ENCODE measurements at regions of chr5 and their contacts with region 1.

Region 1: GRCh38 chr5:55994574-55995333 is at the start of gene IL6ST:
- DNase-seq: peak; percentile 92 to 96 (median 94)
- H3K4me3 ChIP-seq: peak within 1 kb of the TSS; percentile 86 to 96 (median 96)
- H3K4me3 Mint-ChIP-seq: peak within 1 kb of the TSS; percentile 98 to 99
- H3K27ac ChIP-seq: peak within 1 kb of the TSS; percentile 96 to 98
- H3K27ac Mint-ChIP-seq: peak within 1 kb of the TSS; percentile 96 to 99 (median 99)
- H3K4me1 ChIP-seq: peaks cover 32 to 47% of the 10 kb centered on the region in 2 donors
- H3K4me1 Mint-ChIP-seq: peaks cover 54% of the 10 kb centered on the region
- H3K27me3 ChIP-seq: no peaks in the 10 kb centered on the region
- H3K27me3 Mint-ChIP-seq: no peaks in the 10 kb centered on the region
- CTCF ChIP-seq: no peak
- polyA plus RNA-seq, gene IL6ST: 22.1 to 28.7 (median 25.7) TPM

Region 2: DNA sequence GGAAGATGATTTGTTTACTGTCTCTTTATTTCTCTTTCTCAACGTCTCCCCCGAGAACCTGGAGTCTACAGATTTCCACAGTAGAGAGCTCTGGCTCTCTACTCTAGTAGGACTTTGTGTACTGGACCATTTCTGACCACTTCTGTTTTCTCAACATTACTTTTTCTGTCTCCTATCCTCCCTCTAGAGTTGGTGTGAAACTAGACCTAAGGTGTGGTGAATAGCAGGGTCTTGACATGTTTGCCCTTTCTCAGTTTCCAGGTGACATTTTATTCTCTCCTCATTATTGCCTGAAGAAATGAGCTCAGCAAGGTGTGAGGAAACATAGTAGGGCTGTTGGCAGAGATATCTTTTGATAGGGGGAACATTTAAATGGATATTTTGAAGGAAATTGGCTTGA is 62.1 kb after region 1 on chr5:
- intact Hi-C with region 1: no loop called
- DNase-seq: no peak
- H3K4me3 ChIP-seq: no peak overlapping the region
- H3K4me3 Mint-ChIP-seq: no peak overlapping the region
- H3K27ac ChIP-seq: no peak overlapping the region
- H3K27ac Mint-ChIP-seq: no peak overlapping the region
- H3K4me1 ChIP-seq: peaks cover 16 to 23% of the 10 kb centered on the region in 2 donors
- H3K4me1 Mint-ChIP-seq: peaks cover 39% of the 10 kb centered on the region
- H3K27me3 ChIP-seq: no peaks in the 10 kb centered on the region
- H3K27me3 Mint-ChIP-seq: peaks cover 0 to 2% (median 2%) of the 10 kb centered on the region in 3 donors
- CTCF ChIP-seq: no peak

Region 3: DNA sequence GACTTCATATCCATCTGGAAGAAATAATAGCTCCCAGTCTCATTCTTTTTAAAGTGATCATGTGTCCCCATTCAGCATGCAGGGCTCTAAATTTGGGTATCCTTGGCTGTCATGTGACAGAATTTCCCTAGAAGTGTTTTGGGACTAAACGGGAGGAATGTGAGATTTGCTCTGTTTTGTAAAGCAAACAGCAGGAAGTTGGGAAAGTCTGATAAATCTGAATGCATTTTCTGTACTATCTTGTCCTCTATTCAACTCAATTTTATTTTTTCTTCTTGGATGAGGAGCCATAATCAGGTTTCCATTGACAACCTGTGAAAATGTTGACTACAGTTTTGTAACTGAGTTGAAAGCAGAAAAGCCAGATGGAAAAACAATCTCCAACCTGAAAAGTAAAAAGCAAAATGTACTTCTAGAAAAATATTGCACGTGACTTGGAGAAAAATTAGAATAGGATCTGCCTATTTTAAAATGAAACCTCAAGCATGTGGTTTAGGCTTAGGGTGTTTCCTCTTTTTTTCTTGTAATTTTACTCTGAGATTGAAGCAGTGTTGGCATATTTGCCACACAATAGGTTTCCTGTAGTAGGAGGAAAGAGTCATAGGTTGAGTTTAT is 76.2 kb after region 1 on chr5:
- intact Hi-C with region 1: loop called in 1 of 2 experiments (anchors 5 kb)
- DNase-seq: peak; percentile 32 to 62 (median 43)
- H3K4me3 ChIP-seq: peak overlapping the region in 2 of 3 experiments; percentile 17 to 54
- H3K4me3 Mint-ChIP-seq: peak overlapping the region in 1 of 2 donors; percentile 66
- H3K27ac ChIP-seq: peak overlapping the region; percentile 68 to 74
- H3K27ac Mint-ChIP-seq: peak overlapping the region; percentile 71 to 86 (median 84)
- H3K4me1 ChIP-seq: peaks cover 27 to 46% of the 10 kb centered on the region in 2 donors
- H3K4me1 Mint-ChIP-seq: peaks cover 57% of the 10 kb centered on the region
- H3K27me3 ChIP-seq: no peaks in the 10 kb centered on the region
- H3K27me3 Mint-ChIP-seq: peaks cover 2 to 14% (median 5%) of the 10 kb centered on the region in 3 donors
- CTCF ChIP-seq: no peak

Region 4: DNA sequence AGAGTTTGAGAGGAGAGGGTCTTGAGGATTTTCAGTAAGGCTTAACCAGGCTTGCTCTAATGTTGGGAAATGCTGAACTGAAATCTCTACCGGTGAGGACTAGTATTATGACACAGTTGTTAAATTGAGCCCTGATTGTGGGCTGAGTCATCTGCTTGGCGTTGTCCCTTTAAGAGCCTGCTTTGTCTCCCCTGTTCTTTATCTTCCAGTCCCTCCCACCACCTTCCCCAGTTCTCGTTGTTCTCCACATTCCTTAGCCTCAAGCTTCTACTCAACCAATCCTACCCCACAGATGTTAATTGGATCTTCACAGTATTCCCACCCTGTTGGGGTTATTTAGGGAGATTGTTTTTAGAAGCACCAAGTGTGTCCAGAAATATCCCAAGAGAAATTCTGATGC is 180.7 kb after region 1 on chr5:
- intact Hi-C with region 1: loop called in 1 of 2 experiments (anchors 10 kb)
- DNase-seq: peak; percentile 67 to 88 (median 86)
- H3K4me3 ChIP-seq: peak overlapping the region in 2 of 3 experiments; percentile 41 to 57
- H3K4me3 Mint-ChIP-seq: peak overlapping the region; percentile 57 to 75
- H3K27ac ChIP-seq: peak overlapping the region; percentile 77 to 89
- H3K27ac Mint-ChIP-seq: peak overlapping the region; percentile 93 to 99 (median 95)
- H3K4me1 ChIP-seq: peaks cover 77% of the 10 kb centered on the region in 2 donors
- H3K4me1 Mint-ChIP-seq: peaks cover 78% of the 10 kb centered on the region
- H3K27me3 ChIP-seq: no peaks in the 10 kb centered on the region
- H3K27me3 Mint-ChIP-seq: peaks cover 0 to 2% (median 1%) of the 10 kb centered on the region in 3 donors
- CTCF ChIP-seq: no peak

Region 5: DNA sequence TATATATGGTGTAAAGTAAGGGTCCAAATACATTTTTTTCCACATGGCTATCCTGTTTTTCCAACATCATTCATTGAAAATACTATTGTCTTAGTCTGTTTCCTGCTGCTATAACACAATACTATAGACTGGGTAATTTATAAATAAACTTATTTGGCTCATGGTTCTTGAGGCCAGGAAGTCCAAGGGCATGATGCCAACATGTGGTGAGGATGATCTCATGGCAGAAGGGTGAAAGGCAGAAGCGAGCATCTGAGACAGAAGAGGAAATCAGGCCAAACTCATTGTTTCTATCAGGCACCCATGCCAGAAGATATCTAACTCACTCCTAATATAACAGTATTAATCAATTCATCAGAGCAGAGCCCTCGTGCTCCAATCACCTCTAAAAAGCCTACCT is 195.7 kb after region 1 on chr5:
- intact Hi-C with region 1: loop called in 1 of 2 experiments (anchors 10 kb)
- DNase-seq: peak; percentile 82 to 84 (median 83)
- H3K4me3 ChIP-seq: peak overlapping the region in 1 of 3 experiments; percentile 15
- H3K4me3 Mint-ChIP-seq: no peak overlapping the region
- H3K27ac ChIP-seq: peak overlapping the region in 1 of 2 donors; percentile 63
- H3K27ac Mint-ChIP-seq: peak overlapping the region; percentile 59 to 89 (median 82)
- H3K4me1 ChIP-seq: peaks cover 34 to 40% of the 10 kb centered on the region in 2 donors
- H3K4me1 Mint-ChIP-seq: peaks cover 41% of the 10 kb centered on the region
- H3K27me3 ChIP-seq: no peaks in the 10 kb centered on the region
- H3K27me3 Mint-ChIP-seq: peaks cover 0 to 3% (median 1%) of the 10 kb centered on the region in 3 donors
- CTCF ChIP-seq: no peak

Region 6: GRCh38 chr5:56200856-56201666 is 206.3 kb after region 1 on chr5:
- intact Hi-C with region 1: loop called (anchors 5 to 10 kb)
- DNase-seq: peak; percentile 63 to 76 (median 75)
- H3K4me3 ChIP-seq: no peak overlapping the region
- H3K4me3 Mint-ChIP-seq: no peak overlapping the region
- H3K27ac ChIP-seq: no peak overlapping the region
- H3K27ac Mint-ChIP-seq: peak overlapping the region in 3 of 7 donors; percentile 40 to 82 (median 66)
- H3K4me1 ChIP-seq: peaks cover 24% of the 10 kb centered on the region in 2 donors
- H3K4me1 Mint-ChIP-seq: peaks cover 28% of the 10 kb centered on the region
- H3K27me3 ChIP-seq: no peaks in the 10 kb centered on the region
- H3K27me3 Mint-ChIP-seq: peaks cover 0 to 2% (median 2%) of the 10 kb centered on the region in 3 donors
- CTCF ChIP-seq: peak; percentile 89

Region 7: DNA sequence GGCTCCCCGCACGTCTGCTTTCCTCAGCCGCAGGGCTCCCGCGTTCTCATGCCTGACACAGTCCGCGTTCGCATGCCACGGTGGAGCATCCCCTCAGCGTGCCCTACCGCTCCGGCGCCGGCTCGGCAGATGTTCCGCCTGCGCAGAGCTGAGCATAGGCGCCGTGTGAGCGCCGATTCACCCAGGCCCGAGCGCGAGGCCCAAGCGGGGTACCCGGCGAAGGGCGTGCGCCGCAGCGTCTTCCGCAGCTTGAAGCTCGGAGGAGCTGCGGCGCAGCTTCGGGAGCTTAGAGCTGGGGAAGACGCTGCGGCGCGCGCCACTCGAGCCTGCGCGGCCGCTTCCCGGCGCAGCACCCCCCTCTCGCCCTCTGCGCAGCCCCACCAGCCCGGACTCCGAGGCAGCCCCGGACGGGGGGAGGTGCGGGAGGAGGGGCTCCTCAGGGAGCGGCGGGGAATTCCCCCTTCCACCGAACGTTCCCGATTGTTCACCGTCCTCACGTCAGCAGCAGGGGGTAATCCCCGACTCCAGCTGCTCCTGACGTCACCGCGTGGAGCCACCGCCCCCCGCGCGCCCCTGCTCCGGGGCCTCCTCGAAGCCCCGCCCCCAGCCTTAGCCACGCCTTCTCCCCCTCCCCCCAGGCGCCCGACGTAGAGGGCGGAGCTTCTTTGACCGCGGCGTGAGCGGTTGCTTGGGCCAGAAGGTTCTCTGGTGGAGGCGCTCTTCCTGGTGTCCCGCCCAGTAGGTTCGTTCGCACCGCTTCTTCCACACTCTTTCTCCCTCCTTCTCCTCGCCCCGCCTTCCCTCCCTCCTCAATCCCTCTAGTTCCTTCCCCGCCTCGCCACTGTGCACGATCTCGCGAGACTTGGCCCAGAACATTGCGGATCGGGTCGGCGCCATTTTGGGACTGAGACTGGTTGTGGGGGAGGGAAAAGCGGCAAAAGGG is 1178.7 kb after region 1 on chr5 and contains the start of gene GPBP1:
- intact Hi-C with region 1: loop called in 1 of 2 experiments (anchors 10 kb)
- DNase-seq: peak; percentile 98 to 99 (median 99)
- H3K4me3 ChIP-seq: peak within 1 kb of the TSS; percentile 69 to 99 (median 93)
- H3K4me3 Mint-ChIP-seq: peak within 1 kb of the TSS; percentile 89 to 96
- H3K27ac ChIP-seq: peak within 1 kb of the TSS; percentile 98 to 100
- H3K27ac Mint-ChIP-seq: peak within 1 kb of the TSS; percentile 99 to 100 (median 99)
- H3K4me1 ChIP-seq: peaks cover 45 to 54% of the 10 kb centered on the region in 2 donors
- H3K4me1 Mint-ChIP-seq: peaks cover 38% of the 10 kb centered on the region
- H3K27me3 ChIP-seq: no peaks in the 10 kb centered on the region
- H3K27me3 Mint-ChIP-seq: peaks cover 0 to 2% (median 2%) of the 10 kb centered on the region in 3 donors
- CTCF ChIP-seq: no peak
- polyA plus RNA-seq, gene GPBP1: 23.2 to 43.7 (median 30.9) TPM

Measured in CD14-positive monocyte (primary cell).